ENCODE measurements at regions of chr6 and their contacts with region 1.

Region 1: DNA sequence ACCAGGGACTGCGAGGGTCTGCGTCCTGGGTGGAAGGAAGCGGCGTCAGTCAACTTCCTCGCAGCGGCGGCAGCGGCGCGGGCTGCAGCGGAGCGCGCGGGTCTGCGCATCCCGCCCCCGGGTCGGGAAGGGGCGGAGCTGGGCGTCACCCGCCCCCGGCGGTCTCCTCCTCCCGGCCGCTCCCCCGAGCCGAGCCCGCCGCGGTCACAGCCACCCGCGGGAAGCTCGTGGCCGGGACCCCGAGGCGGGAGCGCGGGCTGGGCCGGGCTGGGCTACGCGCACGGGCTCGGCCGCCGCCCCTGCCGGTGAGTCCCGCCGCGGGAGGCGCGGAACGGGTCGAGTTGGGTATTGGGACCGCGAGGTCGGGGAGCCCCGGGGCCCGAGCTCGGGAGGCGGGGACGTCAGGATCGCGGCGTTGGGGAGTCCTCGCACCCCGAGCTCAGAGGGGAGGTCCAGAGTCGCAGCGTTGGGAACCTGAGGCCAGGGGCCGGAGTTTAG is at the start of gene PAQR8:
- DNase-seq: peak; percentile 77 to 88 (median 85)
- H3K4me3 ChIP-seq: peak within 1 kb of the TSS; percentile 62 to 97
- H3K4me3 Mint-ChIP-seq: peak within 1 kb of the TSS; percentile 93 to 99 (median 98)
- H3K27ac ChIP-seq: peak within 1 kb of the TSS; percentile 90
- H3K27ac Mint-ChIP-seq: peak within 1 kb of the TSS; percentile 90 to 98 (median 98)
- H3K4me1 ChIP-seq: peaks cover 41% of the 10 kb centered on the region
- H3K4me1 Mint-ChIP-seq: peaks cover 28 to 53% (median 41%) of the 10 kb centered on the region in 4 donors
- H3K27me3 ChIP-seq: no peaks in the 10 kb centered on the region
- H3K27me3 Mint-ChIP-seq: no peaks in the 10 kb centered on the region
- total RNA-seq, gene PAQR8: 36.4 to 40.9 TPM

Region 2: GRCh38 chr6:52304983-52305390 is 57.0 kb before region 1 on chr6:
- CTCF ChIA-PET with region 1: interaction called, 14 read pairs
- POLR2A ChIA-PET with region 1: interaction called, 49 read pairs
- intact Hi-C with region 1: loop called (anchors 2 kb)
- DNase-seq: peak in 1 of 5 donors; percentile 22
- H3K4me3 ChIP-seq: peak overlapping the region in 1 of 2 donors; percentile 34
- H3K4me3 Mint-ChIP-seq: peak overlapping the region; percentile 73 to 92 (median 82)
- H3K27ac ChIP-seq: peak overlapping the region; percentile 59
- H3K27ac Mint-ChIP-seq: peak overlapping the region; percentile 88 to 96 (median 94)
- H3K4me1 ChIP-seq: peaks cover 73% of the 10 kb centered on the region
- H3K4me1 Mint-ChIP-seq: peaks cover 54 to 89% (median 71%) of the 10 kb centered on the region in 4 donors
- H3K27me3 ChIP-seq: no peaks in the 10 kb centered on the region
- H3K27me3 Mint-ChIP-seq: no peaks in the 10 kb centered on the region

Region 3: GRCh38 chr6:52337633-52338290 is 24.2 kb before region 1 on chr6:
- CTCF ChIA-PET with region 1: interaction called, 36 read pairs
- POLR2A ChIA-PET with region 1: interaction called, 72 read pairs
- intact Hi-C with region 1: loop called (anchors 2 kb)
- DNase-seq: no peak
- H3K4me3 ChIP-seq: no peak overlapping the region
- H3K4me3 Mint-ChIP-seq: peak overlapping the region in 1 of 8 donors; percentile 48
- H3K27ac ChIP-seq: no peak overlapping the region
- H3K27ac Mint-ChIP-seq: peak overlapping the region in 5 of 7 donors; percentile 38 to 86 (median 66)
- H3K4me1 ChIP-seq: peaks cover 60% of the 10 kb centered on the region
- H3K4me1 Mint-ChIP-seq: peaks cover 43 to 67% (median 53%) of the 10 kb centered on the region in 4 donors
- H3K27me3 ChIP-seq: no peaks in the 10 kb centered on the region
- H3K27me3 Mint-ChIP-seq: no peaks in the 10 kb centered on the region

Region 4: GRCh38 chr6:52389626-52390360 is 27.8 kb after region 1 on chr6:
- CTCF ChIA-PET with region 1: interaction called, 86 read pairs
- POLR2A ChIA-PET with region 1: interaction called, 176 read pairs
- intact Hi-C with region 1: loop called (anchors 1 kb)
- DNase-seq: peak; percentile 66 to 85 (median 69)
- H3K4me3 ChIP-seq: peak overlapping the region; percentile 14 to 34
- H3K4me3 Mint-ChIP-seq: peak overlapping the region; percentile 77 to 92 (median 82)
- H3K27ac ChIP-seq: peak overlapping the region; percentile 80
- H3K27ac Mint-ChIP-seq: peak overlapping the region; percentile 95 to 99 (median 97)
- H3K4me1 ChIP-seq: peaks cover 90% of the 10 kb centered on the region
- H3K4me1 Mint-ChIP-seq: peaks cover 67 to 94% (median 81%) of the 10 kb centered on the region in 4 donors
- H3K27me3 ChIP-seq: no peaks in the 10 kb centered on the region
- H3K27me3 Mint-ChIP-seq: no peaks in the 10 kb centered on the region

Region 5: DNA sequence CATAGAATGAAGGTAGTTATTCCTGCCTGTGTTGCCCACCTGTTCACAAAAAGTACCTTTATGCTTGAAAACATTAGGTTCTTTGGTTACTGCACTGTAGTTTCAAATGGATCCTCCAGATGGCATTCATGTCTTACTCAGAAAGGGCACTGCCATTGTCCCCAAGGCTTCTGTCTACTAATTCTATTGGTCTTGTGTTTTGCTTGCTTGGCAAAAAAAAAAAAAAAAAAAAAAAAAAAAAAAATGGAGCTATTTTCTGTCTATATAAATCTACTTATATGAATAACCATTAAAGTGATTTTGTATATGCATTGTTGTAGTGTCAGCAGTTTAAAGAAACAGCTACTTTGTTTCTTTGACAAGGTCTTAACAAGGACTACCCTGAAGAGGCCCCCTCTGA is 45.5 kb after region 1 on chr6:
- CTCF ChIA-PET with region 1: interaction called, 74 read pairs
- POLR2A ChIA-PET with region 1: interaction called, 133 read pairs
- intact Hi-C with region 1: no loop called
- DNase-seq: peak in 3 of 5 donors; percentile 35 to 43 (median 37)
- H3K4me3 ChIP-seq: no peak overlapping the region
- H3K4me3 Mint-ChIP-seq: peak overlapping the region in 1 of 8 donors; percentile 13
- H3K27ac ChIP-seq: no peak overlapping the region
- H3K27ac Mint-ChIP-seq: peak overlapping the region in 6 of 7 donors; percentile 18 to 88 (median 62)
- H3K4me1 ChIP-seq: no peaks in the 10 kb centered on the region
- H3K4me1 Mint-ChIP-seq: peaks cover 0 to 22% (median 11%) of the 10 kb centered on the region in 4 donors
- H3K27me3 ChIP-seq: no peaks in the 10 kb centered on the region
- H3K27me3 Mint-ChIP-seq: no peaks in the 10 kb centered on the region

Measured in CD4-positive, alpha-beta memory T cell (primary cell).